H1 (cell line): ENCODE measurements at regions of chr9 and their contacts with region 1.

Region 1: GRCh38 chr9:128127990-128128835 is 684 bp upstream of the PTGES2 start:
- DNase-seq: peak in 1 of 2 experiments; percentile 92
- H3K4me3 ChIP-seq: peak overlapping the region; percentile 86 to 96 (median 89)
- H3K27ac ChIP-seq: peak overlapping the region; percentile 95
- H3K4me1 ChIP-seq: peaks cover 0 to 6% (median 3%) of the 10 kb centered on the region in 4 experiments; a peak in 4 of 7 replicates
- H3K27me3 ChIP-seq: peaks cover 0 to 8% (median 7%) of the 10 kb centered on the region in 4 experiments; a peak in 5 of 7 replicates
- CTCF ChIP-seq: no peak
- EP300 ChIP-seq: no peak; a peak in 1 of 3 replicates
- POLR2A ChIP-seq: peak in 1 of 2 experiments; percentile 38; a peak in 1 of 3 replicates
- RAD21 ChIP-seq: no peak

Region 2: DNA sequence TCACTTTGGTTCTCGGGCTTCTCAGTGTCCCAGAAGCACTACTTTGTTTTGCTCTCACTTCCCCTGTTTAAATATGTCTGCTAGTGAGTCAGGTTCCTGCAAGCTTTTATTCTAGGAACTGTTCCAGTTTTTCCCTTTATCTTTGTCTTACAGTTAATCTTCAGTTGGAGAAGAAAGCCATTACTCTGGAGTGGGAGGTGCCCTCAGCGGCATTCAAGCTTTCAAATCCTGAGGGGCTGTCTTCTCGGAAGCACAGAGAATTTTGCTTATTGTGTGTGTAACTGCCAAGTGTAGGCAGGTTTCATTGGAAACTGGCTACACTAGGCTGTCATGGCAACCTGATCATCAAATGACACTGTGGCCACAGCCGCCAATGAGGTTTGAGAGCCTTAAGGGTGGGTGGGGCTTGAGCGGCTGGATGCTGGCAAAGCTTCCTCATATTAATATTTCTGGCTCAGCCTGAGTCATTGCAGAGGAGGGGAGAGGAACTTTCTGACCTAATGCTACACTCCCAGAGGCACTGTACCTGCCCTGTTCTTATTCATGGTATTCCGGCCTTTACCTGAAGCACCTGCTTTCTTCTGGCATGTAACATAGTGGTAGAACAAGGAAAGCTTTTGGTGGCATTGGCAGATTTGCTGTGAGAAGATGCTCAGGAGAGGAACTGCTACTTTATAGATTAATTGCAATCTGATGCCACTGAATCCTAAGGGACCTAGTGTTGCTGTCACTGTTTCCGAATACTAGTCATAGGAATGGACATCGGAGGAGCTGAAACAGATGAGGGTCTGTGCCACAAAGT is 33.8 kb before region 1 on chr9:
- CTCF ChIA-PET with region 1: interaction called, 6 read pairs
- POLR2A ChIA-PET with region 1: interaction called, 15 read pairs
- DNase-seq: no peak
- H3K4me3 ChIP-seq: no peak overlapping the region
- H3K27ac ChIP-seq: peak overlapping the region; percentile 46; the same call in 1 of the 2 replicates
- H3K4me1 ChIP-seq: peaks cover 0 to 16% (median 14%) of the 10 kb centered on the region in 4 experiments; a peak in 6 of 7 replicates
- H3K27me3 ChIP-seq: no peaks in the 10 kb centered on the region
- CTCF ChIP-seq: no peak
- EP300 ChIP-seq: no peak
- POLR2A ChIP-seq: no peak
- RAD21 ChIP-seq: no peak

Region 3: DNA sequence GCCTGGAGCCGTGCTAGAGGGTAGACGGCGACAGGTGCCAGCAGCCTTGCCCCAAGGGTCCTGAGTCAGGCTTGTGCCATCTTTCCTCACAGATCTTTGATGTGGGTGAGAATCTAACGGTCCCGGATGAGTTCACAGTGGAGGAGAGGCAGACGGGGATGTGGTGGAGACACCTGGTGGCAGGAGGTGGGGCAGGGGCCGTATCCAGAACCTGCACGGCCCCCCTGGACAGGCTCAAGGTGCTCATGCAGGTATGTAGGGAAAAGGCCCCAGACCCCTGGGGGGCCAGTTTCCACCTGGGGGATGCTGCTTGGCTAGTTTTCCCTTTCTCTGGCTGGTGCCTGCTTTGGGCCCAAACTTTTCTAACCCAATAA is 24.6 kb before region 1 on chr9:
- CTCF ChIA-PET with region 1: interaction called, 32 read pairs
- POLR2A ChIA-PET with region 1: interaction called, 15 read pairs
- DNase-seq: peak in 1 of 2 experiments; percentile 58
- H3K4me3 ChIP-seq: no peak overlapping the region
- H3K27ac ChIP-seq: no peak overlapping the region
- H3K4me1 ChIP-seq: peaks cover 11 to 21% (median 15%) of the 10 kb centered on the region in 4 experiments
- H3K27me3 ChIP-seq: no peaks in the 10 kb centered on the region
- CTCF ChIP-seq: peak in 2 of 3 experiments; percentile 37 to 43; a peak in 3 of 4 replicates
- EP300 ChIP-seq: no peak
- POLR2A ChIP-seq: no peak; a peak in 1 of 3 replicates
- RAD21 ChIP-seq: peak; percentile 26 to 51; a peak in 3 of 4 replicates

Region 4: DNA sequence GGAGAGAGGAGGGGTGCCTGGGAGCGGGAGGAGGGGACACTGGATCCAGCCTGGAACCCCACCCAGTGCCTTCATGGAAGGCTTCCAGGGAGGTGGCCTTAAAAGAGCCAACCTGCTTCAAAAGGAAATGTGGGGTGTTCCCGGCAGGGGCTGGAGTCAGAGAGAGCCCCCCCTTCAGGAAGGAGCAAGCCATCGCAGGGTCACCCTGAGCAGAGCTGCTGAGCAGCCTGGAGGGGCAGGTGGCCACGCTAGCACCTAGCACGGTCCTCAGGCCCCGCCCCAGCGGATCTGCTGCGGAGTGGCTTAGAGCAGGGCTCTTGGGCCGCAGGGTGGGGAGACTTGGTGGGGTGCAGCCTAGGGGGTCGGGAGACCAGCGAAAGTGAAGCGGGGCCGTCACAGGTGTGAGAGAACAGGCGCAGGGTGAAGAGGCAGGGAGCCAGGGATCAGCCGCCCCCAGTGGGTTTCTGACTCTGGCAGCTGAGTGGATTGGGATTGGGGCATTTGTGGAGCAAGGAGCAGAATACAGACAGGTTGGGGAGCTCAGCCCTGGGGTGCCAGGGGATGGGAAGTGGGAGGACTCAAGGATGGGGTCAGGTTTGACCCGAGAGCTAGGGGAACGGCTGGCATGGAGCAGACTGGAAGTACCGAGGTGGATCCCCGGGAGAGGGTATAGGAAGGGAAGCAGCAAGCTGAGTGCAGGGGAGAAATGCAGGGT is 22.5 kb after region 1 on chr9:
- CTCF ChIA-PET with region 1: interaction called, 74 read pairs
- POLR2A ChIA-PET with region 1: interaction called, 7 read pairs
- DNase-seq: peak in 1 of 2 experiments; percentile 86
- H3K4me3 ChIP-seq: peak overlapping the region in 1 of 4 experiments; percentile 10; a peak in 1 of 8 replicates
- H3K27ac ChIP-seq: no peak overlapping the region
- H3K4me1 ChIP-seq: peaks cover 0 to 8% (median 3%) of the 10 kb centered on the region in 4 experiments; a peak in 5 of 7 replicates
- H3K27me3 ChIP-seq: no peaks in the 10 kb centered on the region; a peak in 2 of 7 replicates
- CTCF ChIP-seq: peak in 2 of 3 experiments; percentile 83 to 87; a peak in 3 of 4 replicates
- EP300 ChIP-seq: no peak
- POLR2A ChIP-seq: no peak
- RAD21 ChIP-seq: peak; percentile 21 to 41; a peak in 2 of 4 replicates

Region 5: GRCh38 chr9:128159784-128160602 is 31.8 kb after region 1 on chr9 and contains the start of gene BBLN:
- CTCF ChIA-PET with region 1: interaction called, 13 read pairs
- POLR2A ChIA-PET with region 1: interaction called, 21 read pairs
- DNase-seq: peak; percentile 80 to 98
- H3K4me3 ChIP-seq: peak within 1 kb of the TSS; percentile 70 to 88 (median 79)
- H3K27ac ChIP-seq: peak within 1 kb of the TSS; percentile 66
- H3K4me1 ChIP-seq: peaks cover 0 to 11% (median 1%) of the 10 kb centered on the region in 4 experiments; a peak in 4 of 7 replicates
- H3K27me3 ChIP-seq: no peaks in the 10 kb centered on the region; a peak in 1 of 7 replicates
- CTCF ChIP-seq: no peak
- EP300 ChIP-seq: no peak
- POLR2A ChIP-seq: peak in 1 of 2 experiments; percentile 94; a peak in 2 of 3 replicates
- RAD21 ChIP-seq: no peak
- total RNA-seq, gene BBLN: 63.1 and 66.4 TPM in 2 replicates

Region 6: DNA sequence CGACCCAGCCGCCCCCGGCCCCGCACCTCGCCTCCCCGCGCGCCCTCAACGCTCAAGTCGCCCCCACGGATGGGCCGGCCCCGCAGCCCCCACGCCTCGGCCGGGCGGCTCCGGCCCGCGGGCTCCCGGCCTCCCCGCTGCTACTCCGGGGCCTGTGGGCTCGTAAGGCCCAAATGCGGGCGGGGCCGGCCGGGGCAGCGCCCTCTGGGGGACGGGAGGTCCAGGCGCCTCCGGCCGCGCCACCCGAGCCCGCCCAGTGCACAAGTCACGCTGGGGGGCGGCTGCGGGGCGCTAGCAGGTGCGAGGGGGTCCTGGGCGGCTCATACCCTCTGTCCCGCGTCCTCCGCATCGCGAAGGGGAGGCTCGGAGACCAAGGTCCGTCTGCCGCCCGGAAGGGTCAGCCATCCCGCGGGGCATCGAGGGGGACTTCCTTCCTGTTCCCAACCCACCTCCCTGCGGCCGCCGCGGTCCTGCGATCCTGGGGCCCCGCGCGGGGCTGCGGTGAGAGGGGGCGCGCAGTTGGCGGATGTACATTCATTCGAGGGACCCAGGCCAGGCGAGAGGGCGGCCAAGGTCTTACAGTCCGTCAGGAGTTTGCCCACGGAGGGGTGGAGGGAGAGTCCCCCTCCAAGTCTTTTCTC is 63.3 kb after region 1 on chr9 and contains the start of gene CIZ1:
- CTCF ChIA-PET with region 1: interaction called, 13 read pairs
- POLR2A ChIA-PET with region 1: no interaction called
- DNase-seq: peak in 1 of 2 experiments; percentile 84
- H3K4me3 ChIP-seq: peak within 1 kb of the TSS; percentile 64 to 99 (median 77)
- H3K27ac ChIP-seq: no peak within 1 kb of the TSS; the same call in 1 of the 2 replicates
- H3K4me1 ChIP-seq: peaks cover 0 to 11% (median 4%) of the 10 kb centered on the region in 4 experiments; a peak in 4 of 7 replicates
- H3K27me3 ChIP-seq: no peaks in the 10 kb centered on the region
- CTCF ChIP-seq: peak; percentile 79 to 86 (median 80)
- EP300 ChIP-seq: no peak
- POLR2A ChIP-seq: peak in 1 of 2 experiments; percentile 44; a peak in 1 of 3 replicates
- RAD21 ChIP-seq: peak in 1 of 2 experiments; percentile 15; a peak in 1 of 4 replicates
- total RNA-seq, gene CIZ1: 103 and 107 TPM in 2 replicates